Right ventricle myocardium superior (tissue), 1 donor: ENCODE measurements at regions of chr5 and their contacts with region 1.

Region 1: GRCh38 chr5:55534436-55535198 is at the start of gene PLPP1:
- DNase-seq: peak; percentile 94
- ATAC-seq: peak; percentile 95
- total RNA-seq, gene PLPP1: 75.9 TPM

Region 2: GRCh38 chr5:55364537-55365055 is 170.0 kb before region 1 on chr5:
- intact Hi-C with region 1: no loop called
- DNase-seq: no peak
- ATAC-seq: no peak

Region 3: GRCh38 chr5:55577353-55578060 is 42.9 kb after region 1 on chr5:
- intact Hi-C with region 1: loop called (anchors 5 kb)
- DNase-seq: peak; percentile 73
- ATAC-seq: peak; percentile 94

Region 4: GRCh38 chr5:55601204-55601618 is 66.6 kb after region 1 on chr5:
- intact Hi-C with region 1: loop called (anchors 5 kb)
- DNase-seq: peak; percentile 89
- ATAC-seq: peak; percentile 89

Region 5: GRCh38 chr5:55680353-55680752 is 145.7 kb after region 1 on chr5:
- intact Hi-C with region 1: loop called (anchors 10 kb)
- DNase-seq: no peak
- ATAC-seq: peak; percentile 44